Keratinocyte (primary cell): ENCODE measurements at regions of chr10 and their contacts with region 1.

Region 1: GRCh38 chr10:12466704-12467305 is 117.5 kb downstream of the CAMK1D start:
- DNase-seq: no peak
- H3K4me3 ChIP-seq: no peak overlapping the region
- H3K27ac ChIP-seq: no peak overlapping the region
- H3K4me1 ChIP-seq: no peaks in the 10 kb centered on the region
- H3K27me3 ChIP-seq: no peaks in the 10 kb centered on the region
- CTCF ChIP-seq: no peak

Region 2: DNA sequence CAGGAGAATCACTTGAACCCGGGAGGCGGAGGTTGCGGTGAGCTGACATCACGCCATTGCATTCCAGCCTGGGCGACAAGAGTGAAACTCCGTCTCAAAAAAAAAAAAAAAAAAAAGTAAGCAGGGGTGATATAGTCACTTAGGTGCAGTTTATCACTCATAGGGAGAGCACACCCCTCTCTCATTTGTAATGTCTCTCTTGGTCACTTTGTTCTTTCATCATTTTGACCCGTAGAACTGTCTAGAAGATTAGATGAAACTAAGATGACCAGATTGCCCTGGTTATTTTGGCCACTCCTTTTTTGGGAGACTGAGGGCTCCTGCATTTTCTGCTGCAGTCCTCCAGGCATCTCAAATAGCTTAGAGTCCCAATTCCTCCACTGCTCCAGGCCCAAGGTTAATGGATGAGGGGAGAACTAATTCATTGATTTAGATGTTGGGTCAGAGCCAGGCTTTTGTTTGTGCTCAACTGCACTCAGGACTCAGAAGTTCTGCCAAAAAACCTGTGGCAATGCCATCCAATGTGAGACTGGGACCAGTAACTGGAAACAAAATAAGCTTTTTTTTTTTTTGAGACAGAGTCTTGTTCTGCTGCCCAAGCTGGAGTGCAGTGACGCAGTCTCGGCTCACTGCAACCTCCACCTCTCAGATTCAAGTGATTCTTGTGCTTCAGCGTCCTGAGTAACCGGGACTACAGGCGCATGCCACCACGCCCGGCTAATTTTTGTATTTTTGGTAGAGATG is 167.4 kb before region 1 on chr10:
- dilution Hi-C with region 1: no loop called
- DNase-seq: no peak
- H3K4me3 ChIP-seq: no peak overlapping the region
- H3K27ac ChIP-seq: no peak overlapping the region
- H3K4me1 ChIP-seq: no peaks in the 10 kb centered on the region
- H3K27me3 ChIP-seq: no peaks in the 10 kb centered on the region
- CTCF ChIP-seq: no peak

Region 3: GRCh38 chr10:12656518-12657142 is 189.8 kb after region 1 on chr10:
- dilution Hi-C with region 1: loop called (anchors 25 kb)
- DNase-seq: peak; percentile 26
- H3K4me3 ChIP-seq: no peak overlapping the region
- H3K27ac ChIP-seq: no peak overlapping the region
- H3K4me1 ChIP-seq: no peaks in the 10 kb centered on the region
- H3K27me3 ChIP-seq: no peaks in the 10 kb centered on the region
- CTCF ChIP-seq: peak in 2 of 3 experiments; percentile 66 to 74

Region 4: DNA sequence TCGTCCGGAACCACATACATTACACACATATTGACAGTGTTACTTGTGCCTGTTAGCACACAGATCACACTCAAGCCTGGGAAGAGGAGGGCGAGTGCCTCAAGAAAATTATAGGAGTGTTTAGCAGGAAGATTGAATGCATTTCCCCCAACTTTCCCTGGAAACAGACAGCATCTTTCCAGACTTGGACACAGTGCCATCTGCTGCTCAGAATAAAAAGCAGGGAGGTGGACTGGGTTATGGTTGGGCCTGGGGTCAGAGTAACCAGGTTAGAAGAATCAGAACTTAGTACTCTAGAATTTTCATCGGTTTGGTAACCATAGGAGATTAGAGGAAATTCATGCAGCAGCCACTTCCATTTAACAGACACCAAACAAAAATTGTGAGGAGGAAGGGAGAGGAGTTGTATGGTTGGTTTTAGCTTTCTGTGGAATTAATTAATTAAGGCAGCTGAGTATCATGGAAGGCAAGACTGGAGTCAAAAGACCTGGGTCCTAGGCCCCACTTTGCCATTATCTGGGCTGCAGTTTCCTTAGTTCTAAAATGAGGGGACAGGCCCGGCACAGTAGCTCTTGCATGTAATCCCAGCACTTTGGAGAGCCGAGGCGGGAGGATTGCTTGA is 589.8 kb after region 1 on chr10:
- dilution Hi-C with region 1: no loop called
- DNase-seq: no peak
- H3K4me3 ChIP-seq: no peak overlapping the region
- H3K27ac ChIP-seq: no peak overlapping the region
- H3K4me1 ChIP-seq: no peaks in the 10 kb centered on the region
- H3K27me3 ChIP-seq: no peaks in the 10 kb centered on the region
- CTCF ChIP-seq: peak; percentile 42 to 71 (median 61)